ENCODE measurements at regions of chr2 and their contacts with region 1.

Region 1: GRCh38 chr2:162656516-162656915 is 182.1 kb downstream of the KCNH7 start:
- DNase-seq: no peak
- ATAC-seq: no peak
- H3K4me3 ChIP-seq: no peak overlapping the region
- H3K27ac ChIP-seq: no peak overlapping the region
- H3K4me1 ChIP-seq: no peaks in the 10 kb centered on the region
- H3K27me3 ChIP-seq: no peaks in the 10 kb centered on the region
- CTCF ChIP-seq: no peak
- POLR2A ChIP-seq: no peak
- RAD21 ChIP-seq: no peak

Region 2: GRCh38 chr2:162591403-162592083 is 65.0 kb before region 1 on chr2:
- CTCF ChIA-PET with region 1: interaction called, 7 read pairs
- POLR2A ChIA-PET with region 1: no interaction called
- dilution Hi-C with region 1: no loop called
- in situ Hi-C with region 1: no loop called
- intact Hi-C with region 1: loop called (anchors 10 kb)
- DNase-seq: no peak
- ATAC-seq: no peak
- H3K4me3 ChIP-seq: no peak overlapping the region
- H3K27ac ChIP-seq: no peak overlapping the region
- H3K4me1 ChIP-seq: no peaks in the 10 kb centered on the region
- H3K27me3 ChIP-seq: no peaks in the 10 kb centered on the region
- CTCF ChIP-seq: no peak
- POLR2A ChIP-seq: no peak
- RAD21 ChIP-seq: no peak

Region 3: DNA sequence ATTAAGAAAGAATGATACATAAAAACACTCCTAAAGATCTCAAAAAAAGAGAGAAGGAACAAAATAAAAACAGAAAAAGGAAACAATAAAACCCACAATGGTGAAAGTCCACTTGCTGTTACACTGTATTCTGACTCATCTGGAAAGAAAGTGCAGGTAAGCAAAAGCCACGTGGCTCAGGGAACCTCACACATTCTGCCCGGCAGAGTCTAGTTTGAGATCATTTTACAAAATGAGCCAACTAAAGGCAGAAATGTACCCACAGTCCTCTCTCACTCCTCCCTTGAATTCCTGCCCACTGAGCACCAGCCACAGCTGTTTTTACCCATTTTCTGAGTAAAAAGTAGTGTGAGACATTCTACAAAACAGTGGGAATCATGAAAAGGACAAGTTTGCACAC is 172.0 kb after region 1 on chr2:
- CTCF ChIA-PET with region 1: no interaction called
- POLR2A ChIA-PET with region 1: no interaction called
- dilution Hi-C with region 1: no loop called
- in situ Hi-C with region 1: no loop called
- intact Hi-C with region 1: no loop called
- DNase-seq: no peak
- ATAC-seq: no peak
- H3K4me3 ChIP-seq: no peak overlapping the region
- H3K27ac ChIP-seq: no peak overlapping the region
- H3K4me1 ChIP-seq: no peaks in the 10 kb centered on the region
- H3K27me3 ChIP-seq: no peaks in the 10 kb centered on the region
- CTCF ChIP-seq: no peak
- POLR2A ChIP-seq: no peak
- RAD21 ChIP-seq: no peak

Measured in IMR-90 (cell line).